ENCODE measurements at regions of chr1 and their contacts with region 1.

Region 1: GRCh38 chr1:217528271-217528670 is 102.6 kb downstream of the GPATCH2 start:
- DNase-seq: peak; percentile 75
- ATAC-seq: peak; percentile 39; the same call in 1 of the 2 replicates
- H3K4me3 ChIP-seq: no peak overlapping the region
- H3K27ac ChIP-seq: peak overlapping the region; percentile 16
- H3K4me1 ChIP-seq: peaks cover 36% of the 10 kb centered on the region
- H3K27me3 ChIP-seq: no peaks in the 10 kb centered on the region
- CTCF ChIP-seq: no peak

Region 2: DNA sequence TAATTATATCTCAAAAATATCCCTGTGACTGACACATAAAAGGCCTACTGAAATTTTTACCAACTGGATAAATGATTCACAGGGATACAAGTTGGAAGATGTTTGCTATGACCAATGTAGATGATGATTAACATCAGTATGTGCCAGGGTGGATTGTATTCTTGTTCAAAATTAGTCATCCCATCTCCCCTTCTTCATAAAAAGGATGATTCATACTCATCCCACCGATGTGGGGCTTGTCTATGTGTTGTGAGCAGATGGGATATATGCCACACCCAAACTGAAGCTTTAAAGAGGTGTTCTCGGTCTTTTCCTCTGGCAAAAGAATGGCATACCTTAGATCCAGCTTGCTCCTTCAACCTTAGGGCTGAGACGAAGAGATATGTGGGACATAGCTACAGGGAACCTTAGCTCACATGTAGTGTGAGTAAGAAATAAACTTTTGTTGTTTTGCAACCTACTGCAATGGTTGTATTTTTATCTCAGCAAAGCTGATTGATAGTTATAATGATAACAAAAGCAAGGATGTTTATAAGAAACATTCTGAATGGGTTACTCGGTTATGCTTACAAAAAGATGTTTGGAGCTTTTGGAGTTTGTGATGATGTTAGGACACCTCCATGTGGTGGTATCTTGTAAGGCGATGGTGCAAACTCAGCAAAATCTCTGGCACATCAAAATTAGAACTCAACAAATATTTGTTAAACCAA is 132.2 kb after region 1 on chr1:
- CTCF ChIA-PET with region 1: interaction called, 3 read pairs
- POLR2A ChIA-PET with region 1: no interaction called
- intact Hi-C with region 1: loop called (anchors 5 kb)
- DNase-seq: peak; percentile 98
- ATAC-seq: peak; percentile 93
- H3K4me3 ChIP-seq: peak overlapping the region; percentile 48; the same call in 1 of the 2 replicates
- H3K27ac ChIP-seq: peak overlapping the region; percentile 86
- H3K4me1 ChIP-seq: peaks cover 24% of the 10 kb centered on the region
- H3K27me3 ChIP-seq: no peaks in the 10 kb centered on the region
- CTCF ChIP-seq: peak; percentile 83